GM18951 (cell line): ENCODE measurements at regions of chr14 and their contacts with region 1.

Region 1: DNA sequence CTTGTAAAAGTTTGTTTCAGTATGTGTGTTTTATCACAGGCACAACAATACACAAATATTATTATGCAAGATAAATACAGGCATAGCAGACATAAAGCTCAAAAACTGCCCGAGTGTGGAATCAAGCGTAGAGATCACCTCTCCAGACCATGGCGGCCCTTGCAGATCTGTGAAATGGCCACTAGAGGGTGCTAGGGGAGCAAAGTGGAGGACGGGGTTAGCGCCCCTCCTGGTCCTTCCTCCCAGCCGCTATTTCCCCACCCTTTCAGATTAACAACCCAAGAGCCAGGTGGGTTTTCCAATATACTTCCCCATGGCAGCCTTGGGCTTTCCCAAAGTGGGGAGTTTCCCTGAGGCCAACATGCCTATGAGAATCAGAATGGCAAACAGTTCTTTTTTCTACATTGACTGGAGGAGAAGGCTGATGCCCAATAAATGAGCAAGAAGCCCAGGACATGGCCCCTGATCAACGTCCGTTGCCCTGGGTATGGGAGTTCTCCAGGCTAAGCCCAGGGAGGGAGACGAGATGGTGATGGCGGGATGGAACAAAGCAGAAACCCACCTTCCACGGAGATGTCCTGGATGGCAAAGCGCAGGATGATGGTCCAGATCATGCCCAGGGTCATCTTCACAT is 67.4 kb downstream of the ACTN1 start:
- POLR2A ChIP-seq: no peak

Region 2: GRCh38 chr14:69002069-69002468 is 90.4 kb after region 1 on chr14:
- in situ Hi-C with region 1: no loop called
- POLR2A ChIP-seq: no peak

Region 3: GRCh38 chr14:69088586-69088985 is 176.9 kb after region 1 on chr14:
- in situ Hi-C with region 1: loop called (anchors 10 kb)
- POLR2A ChIP-seq: no peak